Right cardiac atrium (tissue), 5 donors: ENCODE measurements at regions of chr2 and their contacts with region 1.

Region 1: GRCh38 chr2:228048838-228049490 is 132.5 kb downstream of the SPHKAP start:
- DNase-seq: no peak
- ATAC-seq: peak; percentile 81 to 88
- H3K4me3 ChIP-seq: no peak overlapping the region
- H3K27ac ChIP-seq: no peak overlapping the region
- H3K4me1 ChIP-seq: no peaks in the 10 kb centered on the region
- H3K27me3 ChIP-seq: no peaks in the 10 kb centered on the region

Region 2: DNA sequence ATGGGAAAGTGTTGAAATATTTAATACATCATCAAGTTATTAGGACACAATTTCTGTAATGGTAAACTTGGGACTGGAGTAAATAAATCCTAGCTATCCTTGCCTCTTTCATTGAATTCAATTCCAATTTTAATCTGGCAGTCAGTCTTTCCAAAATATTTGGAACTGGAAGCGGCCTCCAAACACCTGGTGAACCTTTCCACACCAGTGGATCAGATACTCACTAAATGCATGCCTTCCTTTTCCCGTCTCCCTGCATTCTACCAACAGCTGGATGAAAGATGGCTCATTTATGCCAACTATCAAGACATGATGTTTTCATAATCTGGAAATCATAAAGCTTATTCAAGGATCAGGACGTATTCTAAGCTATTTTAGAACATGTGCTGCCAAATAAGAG is 620.7 kb after region 1 on chr2:
- intact Hi-C with region 1: loop called in 1 of 4 experiments (anchors 10 kb)
- DNase-seq: no peak
- ATAC-seq: no peak
- H3K4me3 ChIP-seq: no peak overlapping the region
- H3K27ac ChIP-seq: no peak overlapping the region
- H3K4me1 ChIP-seq: no peaks in the 10 kb centered on the region
- H3K27me3 ChIP-seq: no peaks in the 10 kb centered on the region